Colonic mucosa (tissue), 4 donors: ENCODE measurements at regions of chr5 and their contacts with region 1.

Region 1: DNA sequence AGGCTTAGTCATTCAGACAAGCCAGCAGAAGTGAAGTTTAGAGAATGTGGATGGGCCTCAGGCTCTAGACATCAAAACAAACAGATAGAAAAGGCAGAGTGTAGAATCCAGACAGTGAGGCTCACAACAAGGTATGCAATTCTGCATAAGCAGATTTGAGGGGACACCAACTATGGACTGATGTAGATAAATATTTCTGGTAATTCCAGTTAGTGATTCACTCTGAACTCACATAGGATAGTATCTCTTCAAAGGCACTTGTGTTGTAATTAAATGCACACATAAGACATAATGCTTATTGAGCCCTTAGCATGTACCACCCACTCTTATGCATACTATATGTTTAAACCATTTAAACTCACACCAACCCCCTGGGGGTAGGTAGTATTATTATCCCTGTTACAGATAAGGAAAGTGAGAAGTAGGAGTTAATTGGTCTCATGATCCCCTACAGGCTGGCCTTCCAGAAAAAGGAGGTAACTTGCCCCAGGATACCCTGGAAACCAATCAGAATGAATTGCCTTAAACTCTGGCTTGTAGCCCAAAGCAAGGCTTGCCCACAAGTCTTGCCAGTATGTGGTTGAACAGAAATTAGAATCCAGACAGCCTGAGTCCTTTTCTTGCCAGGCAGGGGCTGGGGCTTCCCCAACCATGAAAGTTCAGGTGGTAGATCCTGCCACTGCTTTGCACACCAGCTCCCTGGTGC is 39.5 kb upstream of the HSPB3 start:
- DNase-seq: no peak
- H3K4me3 ChIP-seq: no peak overlapping the region
- H3K27ac ChIP-seq: no peak overlapping the region
- H3K4me1 ChIP-seq: no peaks in the 10 kb centered on the region
- H3K27me3 ChIP-seq: no peaks in the 10 kb centered on the region
- CTCF ChIP-seq: no peak

Region 2: GRCh38 chr5:54115735-54116403 is 300.2 kb before region 1 on chr5:
- intact Hi-C with region 1: no loop called
- DNase-seq: no peak
- H3K4me3 ChIP-seq: no peak overlapping the region
- H3K27ac ChIP-seq: no peak overlapping the region
- H3K4me1 ChIP-seq: no peaks in the 10 kb centered on the region
- H3K27me3 ChIP-seq: no peaks in the 10 kb centered on the region
- CTCF ChIP-seq: no peak

Region 3: GRCh38 chr5:54249210-54250028 is 166.6 kb before region 1 on chr5:
- intact Hi-C with region 1: loop called (anchors 5 kb)
- DNase-seq: peak; percentile 53
- H3K4me3 ChIP-seq: no peak overlapping the region
- H3K27ac ChIP-seq: no peak overlapping the region
- H3K4me1 ChIP-seq: no peaks in the 10 kb centered on the region
- H3K27me3 ChIP-seq: no peaks in the 10 kb centered on the region
- CTCF ChIP-seq: no peak

Region 4: GRCh38 chr5:54317511-54318260 is 98.4 kb before region 1 on chr5:
- intact Hi-C with region 1: loop called (anchors 5 kb)
- DNase-seq: no peak
- H3K4me3 ChIP-seq: no peak overlapping the region
- H3K27ac ChIP-seq: no peak overlapping the region
- H3K4me1 ChIP-seq: no peaks in the 10 kb centered on the region
- H3K27me3 ChIP-seq: no peaks in the 10 kb centered on the region
- CTCF ChIP-seq: no peak

Region 5: DNA sequence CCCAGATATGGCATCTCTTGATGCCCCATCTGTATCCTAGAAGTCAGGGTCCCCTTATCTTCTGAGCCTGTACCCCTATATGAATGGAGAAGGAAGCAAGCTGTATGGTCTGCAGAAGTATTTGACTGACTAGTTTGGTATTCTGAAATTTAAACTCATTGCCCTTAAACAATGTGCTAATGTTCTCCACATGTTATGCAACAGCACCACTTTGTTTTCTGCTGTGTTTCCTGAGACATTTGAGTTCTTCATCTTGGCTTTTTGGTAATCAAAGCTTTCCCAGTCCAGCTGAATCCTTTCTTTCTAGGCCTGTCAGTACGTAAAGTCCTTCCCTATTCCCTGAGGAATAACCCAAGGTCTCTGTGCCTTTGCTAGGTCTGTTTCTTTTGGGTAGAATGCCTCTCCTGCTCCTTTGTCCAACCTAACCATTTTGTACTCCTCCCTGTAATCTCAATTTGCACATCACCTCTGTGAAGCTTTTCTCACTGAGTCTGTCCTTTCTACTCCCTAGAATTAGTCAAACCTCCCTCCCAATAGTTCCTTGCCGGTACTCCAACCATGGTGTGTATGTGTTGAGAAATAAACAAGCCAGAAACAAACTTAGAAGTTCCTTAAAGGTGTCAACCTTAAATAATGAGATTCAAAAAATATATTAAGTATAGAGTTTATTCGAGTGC is 32.7 kb before region 1 on chr5:
- intact Hi-C with region 1: no loop called
- DNase-seq: no peak
- H3K4me3 ChIP-seq: no peak overlapping the region
- H3K27ac ChIP-seq: no peak overlapping the region
- H3K4me1 ChIP-seq: no peaks in the 10 kb centered on the region
- H3K27me3 ChIP-seq: no peaks in the 10 kb centered on the region
- CTCF ChIP-seq: no peak

Region 6: GRCh38 chr5:54624805-54625561 is 208.9 kb after region 1 on chr5:
- intact Hi-C with region 1: no loop called
- DNase-seq: no peak
- H3K4me3 ChIP-seq: no peak overlapping the region
- H3K27ac ChIP-seq: no peak overlapping the region
- H3K4me1 ChIP-seq: no peaks in the 10 kb centered on the region
- H3K27me3 ChIP-seq: no peaks in the 10 kb centered on the region
- CTCF ChIP-seq: no peak

Region 7: GRCh38 chr5:54663866-54664265 is 247.8 kb after region 1 on chr5:
- intact Hi-C with region 1: no loop called
- DNase-seq: no peak
- H3K4me3 ChIP-seq: no peak overlapping the region
- H3K27ac ChIP-seq: no peak overlapping the region
- H3K4me1 ChIP-seq: no peaks in the 10 kb centered on the region
- H3K27me3 ChIP-seq: no peaks in the 10 kb centered on the region
- CTCF ChIP-seq: no peak